Posterior vena cava (tissue), 2 donors: ENCODE measurements at regions of chr22 and their contacts with region 1.

Region 1: GRCh38 chr22:25067851-25068421 is 115.4 kb downstream of the KIAA1671 start:
- DNase-seq: peak; percentile 67

Region 2: GRCh38 chr22:24845041-24845898 is 222.7 kb before region 1 on chr22:
- intact Hi-C with region 1: loop called in 1 of 2 experiments (anchors 5 kb)
- DNase-seq: peak; percentile 88

Region 3: GRCh38 chr22:25110846-25111578 is 43.1 kb after region 1 on chr22:
- intact Hi-C with region 1: loop called in 1 of 2 experiments (anchors 1 kb)
- DNase-seq: peak; percentile 86